ENCODE measurements at regions of chr4 and their contacts with region 1.

Region 1: GRCh38 chr4:87093443-87094123 is 126.8 kb downstream of the KLHL8 start:
- DNase-seq: peak; percentile 59
- H3K4me3 Mint-ChIP-seq: peak overlapping the region; percentile 23
- H3K27ac Mint-ChIP-seq: peak overlapping the region; percentile 87
- H3K4me1 Mint-ChIP-seq: peaks cover 25% of the 10 kb centered on the region
- H3K27me3 Mint-ChIP-seq: no peaks in the 10 kb centered on the region
- CTCF ChIP-seq: peak; percentile 57

Region 2: GRCh38 chr4:86927843-86928395 is 165.7 kb before region 1 on chr4:
- CTCF ChIA-PET with region 1: interaction called, 53 read pairs
- POLR2A ChIA-PET with region 1: interaction called, 23 read pairs
- intact Hi-C with region 1: no loop called
- DNase-seq: peak; percentile 99
- H3K4me3 Mint-ChIP-seq: peak overlapping the region; percentile 32
- H3K27ac Mint-ChIP-seq: peak overlapping the region; percentile 88
- H3K4me1 Mint-ChIP-seq: peaks cover 45% of the 10 kb centered on the region
- H3K27me3 Mint-ChIP-seq: no peaks in the 10 kb centered on the region
- CTCF ChIP-seq: no peak

Region 3: DNA sequence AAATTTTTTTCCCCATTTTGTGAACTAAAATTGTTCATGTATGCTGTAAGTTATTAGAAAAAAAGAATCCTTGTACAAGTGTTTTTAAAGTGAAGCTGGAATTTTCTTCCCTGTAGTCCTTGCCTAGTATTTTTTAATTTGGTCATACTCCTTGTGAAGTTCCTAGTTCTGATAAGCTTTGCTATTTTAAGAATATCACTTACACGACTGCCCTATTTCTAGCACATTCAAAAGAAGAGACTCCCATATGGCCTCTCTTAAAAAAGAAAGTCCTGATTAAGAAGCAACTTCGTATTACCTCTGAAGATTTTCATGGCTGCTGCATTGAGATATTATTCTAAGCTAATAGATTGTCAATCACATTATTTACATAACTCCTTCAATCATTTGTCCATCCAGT is 39.6 kb after region 1 on chr4:
- CTCF ChIA-PET with region 1: no interaction called
- POLR2A ChIA-PET with region 1: no interaction called
- intact Hi-C with region 1: no loop called
- DNase-seq: no peak
- H3K4me3 Mint-ChIP-seq: no peak overlapping the region
- H3K27ac Mint-ChIP-seq: no peak overlapping the region
- H3K4me1 Mint-ChIP-seq: no peaks in the 10 kb centered on the region
- H3K27me3 Mint-ChIP-seq: no peaks in the 10 kb centered on the region
- CTCF ChIP-seq: no peak

Region 4: GRCh38 chr4:87406462-87406861 is 312.9 kb after region 1 on chr4:
- CTCF ChIA-PET with region 1: no interaction called
- POLR2A ChIA-PET with region 1: no interaction called
- intact Hi-C with region 1: no loop called
- DNase-seq: no peak
- H3K4me3 Mint-ChIP-seq: no peak overlapping the region
- H3K27ac Mint-ChIP-seq: no peak overlapping the region
- H3K4me1 Mint-ChIP-seq: peaks cover 20% of the 10 kb centered on the region
- H3K27me3 Mint-ChIP-seq: no peaks in the 10 kb centered on the region
- CTCF ChIP-seq: no peak